ENCODE measurements at regions of chr1 and their contacts with region 1.

Region 1: DNA sequence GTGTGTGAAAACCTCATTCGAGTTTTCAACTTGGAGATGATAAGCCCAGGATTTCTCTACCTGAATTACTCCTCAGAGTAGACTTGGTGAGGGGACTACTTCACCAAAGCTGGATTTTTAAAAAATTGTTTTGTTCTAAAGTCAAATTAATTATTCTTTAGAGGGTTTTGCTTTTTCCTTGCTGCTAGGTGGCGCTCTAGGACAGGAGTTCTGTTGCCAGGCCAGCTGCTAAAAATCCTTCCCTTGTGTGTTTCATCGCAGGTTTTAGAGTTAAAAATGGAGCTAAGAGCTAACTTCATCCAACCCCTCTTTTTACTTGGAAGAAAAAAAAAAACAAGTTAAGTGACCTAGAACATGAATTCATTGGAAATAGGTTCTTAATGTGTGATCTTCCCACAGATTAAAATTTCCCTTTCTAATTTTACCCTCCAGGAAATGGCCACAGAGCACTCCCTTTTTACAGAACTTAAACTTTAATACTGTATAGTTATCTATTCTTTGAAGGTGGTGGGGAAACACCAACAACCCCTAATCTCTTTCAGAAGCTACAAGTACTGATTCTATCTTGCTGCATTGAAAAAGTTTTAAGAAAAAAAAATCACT is 36.7 kb upstream of the FAM163A start:
- H3K4me3 ChIP-seq: no peak overlapping the region
- H3K27ac ChIP-seq: no peak overlapping the region
- H3K4me1 ChIP-seq: no peaks in the 10 kb centered on the region
- CTCF ChIP-seq: peak; percentile 45; the same call in 1 of the 2 replicates

Region 2: GRCh38 chr1:179424610-179425009 is 281.8 kb before region 1 on chr1:
- CTCF ChIA-PET with region 1: no interaction called
- POLR2A ChIA-PET with region 1: no interaction called
- H3K4me3 ChIP-seq: no peak overlapping the region
- H3K27ac ChIP-seq: no peak overlapping the region
- H3K4me1 ChIP-seq: no peaks in the 10 kb centered on the region
- CTCF ChIP-seq: no peak

Region 3: DNA sequence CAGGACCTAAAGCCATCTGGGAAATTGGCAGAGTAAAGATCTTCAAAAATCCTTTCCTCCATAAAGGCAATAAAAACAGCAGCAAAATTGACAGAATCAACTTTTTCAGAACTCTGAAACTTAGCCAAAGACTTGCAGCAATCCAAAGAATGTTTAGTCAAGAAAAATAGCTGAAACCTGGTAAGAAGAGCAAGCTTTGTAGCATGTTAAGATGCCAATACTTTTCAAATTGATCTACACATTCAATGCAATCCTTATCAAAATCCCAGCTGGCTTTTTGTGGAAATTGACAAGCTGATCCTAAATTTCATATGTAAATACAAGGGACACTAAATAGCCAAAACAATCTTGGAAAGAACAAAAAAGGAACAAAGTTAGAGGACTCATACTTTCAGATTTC is 12.8 kb after region 1 on chr1:
- CTCF ChIA-PET with region 1: interaction called, 12 read pairs
- POLR2A ChIA-PET with region 1: no interaction called
- H3K4me3 ChIP-seq: no peak overlapping the region
- H3K27ac ChIP-seq: no peak overlapping the region
- H3K4me1 ChIP-seq: no peaks in the 10 kb centered on the region
- CTCF ChIP-seq: no peak

Region 4: GRCh38 chr1:179770884-179771502 is 64.6 kb after region 1 on chr1:
- CTCF ChIA-PET with region 1: interaction called, 11 read pairs
- POLR2A ChIA-PET with region 1: no interaction called
- H3K4me3 ChIP-seq: no peak overlapping the region
- H3K27ac ChIP-seq: no peak overlapping the region
- H3K4me1 ChIP-seq: no peaks in the 10 kb centered on the region
- CTCF ChIP-seq: no peak

Region 5: GRCh38 chr1:179816196-179816960 is 109.9 kb after region 1 on chr1:
- CTCF ChIA-PET with region 1: interaction called, 345 read pairs
- POLR2A ChIA-PET with region 1: interaction called, 3 read pairs
- H3K4me3 ChIP-seq: no peak overlapping the region
- H3K27ac ChIP-seq: no peak overlapping the region
- H3K4me1 ChIP-seq: no peaks in the 10 kb centered on the region; the same call in 1 of the 2 replicates
- CTCF ChIP-seq: no peak

Region 6: DNA sequence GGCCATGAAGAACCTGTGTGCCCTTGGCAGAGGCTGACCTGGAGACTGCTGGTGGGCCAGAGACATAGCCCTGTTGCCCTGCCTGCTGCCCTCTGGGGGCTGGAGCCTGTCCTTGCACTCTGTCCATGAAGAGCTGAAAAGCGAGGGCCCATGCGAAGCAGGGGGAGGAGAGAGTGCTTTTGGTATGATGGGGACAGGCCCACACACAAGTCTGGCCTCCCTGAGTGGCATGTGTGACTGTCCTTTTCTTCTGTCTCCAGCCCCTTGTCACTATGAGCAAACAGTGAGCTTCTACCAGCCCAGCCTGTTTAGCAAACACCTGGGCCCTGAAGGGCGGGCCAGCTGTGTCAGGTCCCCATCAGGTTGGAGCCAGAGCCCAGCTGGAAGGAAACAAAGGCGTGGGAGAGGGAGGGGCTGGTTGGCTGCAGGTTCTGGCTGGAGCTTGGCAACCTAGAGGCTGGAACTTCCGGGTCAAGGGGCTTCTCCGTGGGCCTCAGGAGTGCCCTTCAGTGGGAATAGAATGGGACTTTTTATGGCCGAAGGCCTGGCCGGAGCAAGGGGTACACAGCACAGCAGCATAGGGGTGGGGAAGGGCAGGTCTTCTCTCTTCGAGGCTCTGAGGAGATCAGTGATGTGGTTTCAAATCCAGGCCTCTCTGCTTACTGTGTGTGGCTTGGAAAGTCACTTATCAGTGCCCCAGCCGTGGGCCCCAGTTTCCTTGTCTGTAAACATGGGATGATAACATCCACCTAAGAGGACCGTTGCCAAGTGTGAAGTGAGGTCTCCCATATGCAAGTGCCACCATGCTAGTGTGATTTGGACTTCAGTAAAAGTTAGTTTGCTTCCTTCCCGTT is 462.6 kb after region 1 on chr1:
- CTCF ChIA-PET with region 1: interaction called, 93 read pairs
- POLR2A ChIA-PET with region 1: no interaction called
- H3K4me3 ChIP-seq: no peak overlapping the region
- H3K27ac ChIP-seq: no peak overlapping the region
- H3K4me1 ChIP-seq: peaks cover 11% of the 10 kb centered on the region
- CTCF ChIP-seq: peak; percentile 49; the same call in 1 of the 2 replicates